B cell (primary cell): ENCODE measurements at regions of chr17 and their contacts with region 1.

Region 1: GRCh38 chr17:70144260-70144846 is 25.0 kb upstream of the KCNJ2 start:
- DNase-seq: peak; percentile 38
- ATAC-seq: no peak
- H3K4me3 ChIP-seq: no peak overlapping the region
- H3K4me3 Mint-ChIP-seq: no peak overlapping the region
- H3K27ac ChIP-seq: no peak overlapping the region
- H3K27ac Mint-ChIP-seq: no peak overlapping the region
- H3K4me1 ChIP-seq: no peaks in the 10 kb centered on the region
- H3K4me1 Mint-ChIP-seq: no peaks in the 10 kb centered on the region
- H3K27me3 ChIP-seq: no peaks in the 10 kb centered on the region
- H3K27me3 Mint-ChIP-seq: peaks cover 6% of the 10 kb centered on the region
- CTCF ChIP-seq: peak; percentile 75

Region 2: GRCh38 chr17:69560987-69561441 is 583.3 kb before region 1 on chr17:
- CTCF ChIA-PET with region 1: interaction called, 71 read pairs
- POLR2A ChIA-PET with region 1: no interaction called
- intact Hi-C with region 1: no loop called
- DNase-seq: no peak
- ATAC-seq: no peak
- H3K4me3 ChIP-seq: no peak overlapping the region
- H3K4me3 Mint-ChIP-seq: no peak overlapping the region
- H3K27ac ChIP-seq: no peak overlapping the region
- H3K27ac Mint-ChIP-seq: no peak overlapping the region
- H3K4me1 ChIP-seq: no peaks in the 10 kb centered on the region
- H3K4me1 Mint-ChIP-seq: no peaks in the 10 kb centered on the region
- H3K27me3 ChIP-seq: no peaks in the 10 kb centered on the region
- H3K27me3 Mint-ChIP-seq: peaks cover 9% of the 10 kb centered on the region
- CTCF ChIP-seq: no peak

Region 3: DNA sequence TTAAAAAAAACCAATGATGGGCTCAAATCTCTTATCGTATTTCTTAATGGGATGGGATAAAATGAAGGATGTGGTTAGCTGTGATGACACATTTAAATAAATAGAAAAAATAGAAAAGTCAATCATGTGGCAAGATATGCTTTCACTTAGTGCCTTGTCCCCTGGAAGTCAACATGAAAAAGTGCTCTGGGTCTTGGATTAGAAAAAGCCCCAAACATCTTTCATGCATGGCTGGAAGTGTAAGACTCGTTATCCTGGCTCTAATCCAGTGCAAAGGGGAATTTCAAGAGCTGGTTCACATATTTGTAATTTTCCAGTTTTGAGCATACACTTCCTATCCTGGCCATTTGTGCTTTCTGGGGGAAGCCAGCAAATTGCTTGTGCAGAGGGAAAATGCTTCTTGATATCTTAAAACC is 569.0 kb before region 1 on chr17:
- CTCF ChIA-PET with region 1: interaction called, 71 read pairs
- POLR2A ChIA-PET with region 1: no interaction called
- intact Hi-C with region 1: no loop called
- DNase-seq: no peak
- ATAC-seq: no peak
- H3K4me3 ChIP-seq: no peak overlapping the region
- H3K4me3 Mint-ChIP-seq: peak overlapping the region; percentile 2
- H3K27ac ChIP-seq: no peak overlapping the region
- H3K27ac Mint-ChIP-seq: no peak overlapping the region
- H3K4me1 ChIP-seq: peaks cover 6 to 10% of the 10 kb centered on the region in 2 donors
- H3K4me1 Mint-ChIP-seq: peaks cover 35% of the 10 kb centered on the region
- H3K27me3 ChIP-seq: no peaks in the 10 kb centered on the region
- H3K27me3 Mint-ChIP-seq: peaks cover 6% of the 10 kb centered on the region
- CTCF ChIP-seq: no peak

Region 4: GRCh38 chr17:69949973-69950695 is 194.2 kb before region 1 on chr17:
- CTCF ChIA-PET with region 1: no interaction called
- POLR2A ChIA-PET with region 1: no interaction called
- intact Hi-C with region 1: no loop called
- DNase-seq: no peak
- ATAC-seq: no peak
- H3K4me3 ChIP-seq: no peak overlapping the region
- H3K4me3 Mint-ChIP-seq: no peak overlapping the region
- H3K27ac ChIP-seq: no peak overlapping the region
- H3K27ac Mint-ChIP-seq: no peak overlapping the region
- H3K4me1 ChIP-seq: no peaks in the 10 kb centered on the region
- H3K4me1 Mint-ChIP-seq: no peaks in the 10 kb centered on the region
- H3K27me3 ChIP-seq: no peaks in the 10 kb centered on the region
- H3K27me3 Mint-ChIP-seq: no peaks in the 10 kb centered on the region
- CTCF ChIP-seq: no peak

Region 5: GRCh38 chr17:70208825-70209555 is 64.6 kb after region 1 on chr17:
- CTCF ChIA-PET with region 1: no interaction called
- POLR2A ChIA-PET with region 1: no interaction called
- intact Hi-C with region 1: no loop called
- DNase-seq: no peak
- ATAC-seq: no peak
- H3K4me3 ChIP-seq: no peak overlapping the region
- H3K4me3 Mint-ChIP-seq: no peak overlapping the region
- H3K27ac ChIP-seq: no peak overlapping the region
- H3K27ac Mint-ChIP-seq: no peak overlapping the region
- H3K4me1 ChIP-seq: no peaks in the 10 kb centered on the region
- H3K4me1 Mint-ChIP-seq: no peaks in the 10 kb centered on the region
- H3K27me3 ChIP-seq: no peaks in the 10 kb centered on the region
- H3K27me3 Mint-ChIP-seq: no peaks in the 10 kb centered on the region
- CTCF ChIP-seq: no peak

Region 6: DNA sequence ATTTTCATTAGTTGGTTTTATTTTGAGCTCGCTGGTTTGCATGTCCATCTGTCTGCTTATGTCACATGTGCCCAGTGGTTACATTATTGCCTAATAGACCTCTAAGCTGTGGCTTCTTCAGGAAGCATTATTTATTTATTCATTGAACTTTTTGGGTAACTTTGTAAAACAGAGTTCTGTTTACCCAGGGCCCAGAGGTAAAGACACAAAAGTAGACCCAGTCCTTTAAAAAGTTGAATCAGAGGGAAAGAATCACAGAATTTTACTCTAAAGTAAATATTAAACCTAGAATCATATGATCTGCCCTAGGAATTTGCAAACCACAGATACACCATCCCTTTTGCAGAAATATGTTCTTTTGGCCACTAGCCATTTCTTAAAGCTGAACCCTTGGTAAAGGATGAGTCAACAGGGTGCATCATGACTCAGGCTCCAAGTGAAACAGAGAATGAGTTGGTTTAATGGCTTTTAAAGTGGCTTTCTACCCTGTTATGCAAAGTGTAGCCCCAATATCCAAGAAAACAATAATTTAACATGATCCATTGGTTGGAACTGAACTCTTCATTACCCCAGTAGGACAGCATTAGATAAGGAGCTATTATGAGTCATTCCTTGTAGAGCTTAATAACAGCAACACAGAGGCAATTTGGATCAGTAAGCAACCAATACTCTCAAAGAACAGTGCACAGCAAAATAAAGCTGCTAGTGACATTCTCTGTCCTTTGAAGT is 261.3 kb after region 1 on chr17:
- CTCF ChIA-PET with region 1: no interaction called
- POLR2A ChIA-PET with region 1: no interaction called
- intact Hi-C with region 1: no loop called
- DNase-seq: no peak
- ATAC-seq: no peak
- H3K4me3 ChIP-seq: no peak overlapping the region
- H3K4me3 Mint-ChIP-seq: no peak overlapping the region
- H3K27ac ChIP-seq: no peak overlapping the region
- H3K27ac Mint-ChIP-seq: no peak overlapping the region
- H3K4me1 ChIP-seq: no peaks in the 10 kb centered on the region
- H3K4me1 Mint-ChIP-seq: no peaks in the 10 kb centered on the region
- H3K27me3 ChIP-seq: no peaks in the 10 kb centered on the region
- H3K27me3 Mint-ChIP-seq: no peaks in the 10 kb centered on the region
- CTCF ChIP-seq: no peak